ENCODE measurements at regions of chr1 and their contacts with region 1.

Region 1: GRCh38 chr1:200530623-200531261 is 89.8 kb downstream of the KIF14 start:
- DNase-seq: no peak
- H3K4me3 ChIP-seq: no peak overlapping the region
- H3K27ac ChIP-seq: no peak overlapping the region
- H3K4me1 ChIP-seq: peaks cover 7% of the 10 kb centered on the region; the same call in 1 of the 2 replicates
- H3K27me3 ChIP-seq: no peaks in the 10 kb centered on the region
- CTCF ChIP-seq: no peak

Region 2: GRCh38 chr1:200620273-200621131 is 89.8 kb after region 1 on chr1 and contains the start of gene KIF14:
- CTCF ChIA-PET with region 1: no interaction called
- POLR2A ChIA-PET with region 1: no interaction called
- intact Hi-C with region 1: no loop called
- DNase-seq: peak; percentile 81 to 91
- H3K4me3 ChIP-seq: peak within 1 kb of the TSS; percentile 69
- H3K27ac ChIP-seq: peak within 1 kb of the TSS; percentile 53
- H3K4me1 ChIP-seq: peaks cover 17% of the 10 kb centered on the region
- H3K27me3 ChIP-seq: no peaks in the 10 kb centered on the region
- CTCF ChIP-seq: no peak
- total RNA-seq, gene KIF14: 22.8 and 30.0 TPM in 2 replicates

Region 3: GRCh38 chr1:200802865-200803512 is 272.2 kb after region 1 on chr1:
- CTCF ChIA-PET with region 1: no interaction called
- POLR2A ChIA-PET with region 1: no interaction called
- intact Hi-C with region 1: loop called (anchors 1 kb)
- DNase-seq: peak; percentile 57 to 74
- H3K4me3 ChIP-seq: no peak overlapping the region
- H3K27ac ChIP-seq: no peak overlapping the region
- H3K4me1 ChIP-seq: no peaks in the 10 kb centered on the region
- H3K27me3 ChIP-seq: no peaks in the 10 kb centered on the region
- CTCF ChIP-seq: peak; percentile 93

Region 4: GRCh38 chr1:201080135-201080534 is 549.4 kb after region 1 on chr1:
- CTCF ChIA-PET with region 1: interaction called, 10 read pairs
- POLR2A ChIA-PET with region 1: no interaction called
- intact Hi-C with region 1: no loop called
- DNase-seq: no peak
- H3K4me3 ChIP-seq: no peak overlapping the region
- H3K27ac ChIP-seq: no peak overlapping the region
- H3K4me1 ChIP-seq: no peaks in the 10 kb centered on the region
- H3K27me3 ChIP-seq: peaks cover 57% of the 10 kb centered on the region
- CTCF ChIP-seq: no peak

Region 5: GRCh38 chr1:201530741-201531531 is 1000.2 kb after region 1 on chr1:
- CTCF ChIA-PET with region 1: no interaction called
- POLR2A ChIA-PET with region 1: no interaction called
- intact Hi-C with region 1: no loop called
- DNase-seq: peak; percentile 48 to 78
- H3K4me3 ChIP-seq: no peak overlapping the region
- H3K27ac ChIP-seq: no peak overlapping the region
- H3K4me1 ChIP-seq: peaks cover 16% of the 10 kb centered on the region
- H3K27me3 ChIP-seq: no peaks in the 10 kb centered on the region
- CTCF ChIP-seq: peak; percentile 77

Measured in PC-9 (cell line).